Activated CD4-positive, alpha-beta T cell treated with anti-CD3 and anti-CD28 coated beads for 36 hours (primary cell): ENCODE measurements at regions of chr17 and their contacts with region 1.

Region 1: GRCh38 chr17:69574257-69575197 is 160.0 kb downstream of the MAP2K6 start:
- DNase-seq: no peak
- ATAC-seq: no peak
- H3K4me3 Mint-ChIP-seq: no peak overlapping the region
- H3K27ac Mint-ChIP-seq: no peak overlapping the region
- H3K4me1 Mint-ChIP-seq: no peaks in the 10 kb centered on the region
- H3K27me3 Mint-ChIP-seq: peaks cover 16% of the 10 kb centered on the region

Region 2: DNA sequence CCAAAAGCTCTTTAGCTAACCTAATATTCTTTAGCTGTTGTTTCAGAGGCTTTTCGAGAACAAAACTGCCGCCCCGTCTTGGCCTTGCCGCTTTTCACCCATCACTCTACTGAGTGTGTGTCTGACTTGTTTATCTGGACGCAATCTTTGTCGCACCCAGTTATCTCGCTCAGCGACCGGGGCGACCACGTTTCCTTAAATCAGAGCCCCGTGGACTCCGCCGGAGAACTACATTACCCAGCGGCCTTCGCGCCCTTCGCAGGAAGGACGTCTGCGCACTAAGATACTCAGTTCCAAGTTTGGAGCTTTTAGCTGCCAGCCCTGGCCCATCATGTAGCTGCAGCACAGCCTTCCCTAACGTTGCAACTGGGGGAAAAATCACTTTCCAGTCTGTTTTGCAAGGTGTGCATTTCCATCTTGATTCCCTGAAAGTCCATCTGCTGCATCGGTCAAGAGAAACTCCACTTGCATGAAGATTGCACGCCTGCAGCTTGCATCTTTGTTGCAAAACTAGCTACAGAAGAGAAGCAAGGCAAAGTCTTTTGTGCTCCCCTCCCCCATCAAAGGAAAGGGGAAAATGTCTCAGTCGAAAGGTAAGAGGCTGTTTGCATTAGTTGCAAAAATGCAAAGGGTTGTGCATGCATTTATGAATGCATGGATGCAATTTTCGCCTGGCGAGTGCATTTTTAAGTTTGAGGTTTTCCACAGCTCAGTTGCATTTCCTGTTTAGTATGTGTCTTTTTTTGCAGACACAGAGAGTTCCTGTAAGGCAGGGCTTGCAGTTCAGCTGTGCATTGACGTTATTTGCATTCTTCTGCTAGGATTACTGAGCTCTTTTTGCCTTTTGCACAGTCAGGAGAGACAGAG is 159.9 kb before region 1 on chr17 and contains the start of gene MAP2K6:
- CTCF ChIA-PET with region 1: no interaction called
- POLR2A ChIA-PET with region 1: no interaction called
- intact Hi-C with region 1: no loop called
- DNase-seq: peak; percentile 91
- ATAC-seq: peak; percentile 99
- H3K4me3 Mint-ChIP-seq: no peak within 1 kb of the TSS
- H3K27ac Mint-ChIP-seq: no peak within 1 kb of the TSS
- H3K4me1 Mint-ChIP-seq: peaks cover 10% of the 10 kb centered on the region
- H3K27me3 Mint-ChIP-seq: no peaks in the 10 kb centered on the region
- total RNA-seq, gene MAP2K6: 2.7 to 3.4 TPM

Region 3: GRCh38 chr17:69659921-69660320 is 85.4 kb after region 1 on chr17:
- CTCF ChIA-PET with region 1: no interaction called
- POLR2A ChIA-PET with region 1: no interaction called
- intact Hi-C with region 1: no loop called
- DNase-seq: no peak
- ATAC-seq: no peak
- H3K4me3 Mint-ChIP-seq: no peak overlapping the region
- H3K27ac Mint-ChIP-seq: no peak overlapping the region
- H3K4me1 Mint-ChIP-seq: no peaks in the 10 kb centered on the region
- H3K27me3 Mint-ChIP-seq: peaks cover 3% of the 10 kb centered on the region

Region 4: GRCh38 chr17:70144260-70144846 is 569.8 kb after region 1 on chr17:
- CTCF ChIA-PET with region 1: interaction called, 3 read pairs
- POLR2A ChIA-PET with region 1: no interaction called
- intact Hi-C with region 1: loop called (anchors 1 to 2 kb)
- DNase-seq: no peak
- ATAC-seq: no peak
- H3K4me3 Mint-ChIP-seq: no peak overlapping the region
- H3K27ac Mint-ChIP-seq: no peak overlapping the region
- H3K4me1 Mint-ChIP-seq: no peaks in the 10 kb centered on the region
- H3K27me3 Mint-ChIP-seq: peaks cover 7% of the 10 kb centered on the region

Region 5: DNA sequence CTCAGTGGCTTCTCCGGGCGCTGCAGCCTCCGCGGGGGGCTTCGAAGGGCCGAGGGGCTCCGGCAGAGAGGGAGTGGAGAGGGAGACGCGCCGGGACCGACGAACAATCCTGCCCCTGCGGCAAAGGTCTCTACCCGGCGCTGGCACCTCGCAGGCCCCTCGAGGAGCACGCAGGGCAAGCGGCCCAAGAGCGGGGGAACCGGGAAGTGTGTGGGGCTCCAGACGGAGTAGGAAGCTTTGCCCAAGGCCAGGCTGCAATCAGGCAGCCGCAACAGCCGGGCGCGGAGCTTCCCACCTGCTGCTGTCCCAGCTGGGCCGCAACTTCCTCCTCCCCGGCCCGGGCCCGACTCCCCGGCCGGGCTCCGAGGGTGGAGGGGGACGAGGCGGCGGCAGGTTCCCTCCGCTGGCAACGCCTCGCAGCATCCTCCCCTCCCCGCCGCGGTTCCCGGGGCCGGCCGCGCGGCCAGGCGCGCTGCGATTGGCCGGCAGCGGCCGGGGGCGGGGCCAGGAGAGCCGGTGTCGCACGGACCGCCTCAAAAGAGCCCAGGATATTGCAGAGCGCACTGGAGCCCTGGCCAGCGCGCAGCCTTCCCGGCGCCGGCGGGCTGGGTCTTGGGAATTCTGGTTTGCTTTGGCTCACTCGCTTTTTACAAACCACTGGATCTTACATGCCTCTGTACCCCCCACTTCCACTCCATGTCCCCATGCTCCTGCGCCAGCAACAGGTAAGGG is 594.6 kb after region 1 on chr17 and contains the start of gene KCNJ2:
- CTCF ChIA-PET with region 1: no interaction called
- POLR2A ChIA-PET with region 1: no interaction called
- intact Hi-C with region 1: loop called in 1 of 2 experiments (anchors 2 kb)
- DNase-seq: peak; percentile 79
- ATAC-seq: peak; percentile 95
- H3K4me3 Mint-ChIP-seq: peak within 1 kb of the TSS; percentile 71
- H3K27ac Mint-ChIP-seq: peak within 1 kb of the TSS; percentile 32
- H3K4me1 Mint-ChIP-seq: peaks cover 14% of the 10 kb centered on the region
- H3K27me3 Mint-ChIP-seq: peaks cover 65% of the 10 kb centered on the region
- total RNA-seq, gene KCNJ2: not detected